HEK293 (cell line): ENCODE measurements at regions of chr17 and their contacts with region 1.

Region 1: DNA sequence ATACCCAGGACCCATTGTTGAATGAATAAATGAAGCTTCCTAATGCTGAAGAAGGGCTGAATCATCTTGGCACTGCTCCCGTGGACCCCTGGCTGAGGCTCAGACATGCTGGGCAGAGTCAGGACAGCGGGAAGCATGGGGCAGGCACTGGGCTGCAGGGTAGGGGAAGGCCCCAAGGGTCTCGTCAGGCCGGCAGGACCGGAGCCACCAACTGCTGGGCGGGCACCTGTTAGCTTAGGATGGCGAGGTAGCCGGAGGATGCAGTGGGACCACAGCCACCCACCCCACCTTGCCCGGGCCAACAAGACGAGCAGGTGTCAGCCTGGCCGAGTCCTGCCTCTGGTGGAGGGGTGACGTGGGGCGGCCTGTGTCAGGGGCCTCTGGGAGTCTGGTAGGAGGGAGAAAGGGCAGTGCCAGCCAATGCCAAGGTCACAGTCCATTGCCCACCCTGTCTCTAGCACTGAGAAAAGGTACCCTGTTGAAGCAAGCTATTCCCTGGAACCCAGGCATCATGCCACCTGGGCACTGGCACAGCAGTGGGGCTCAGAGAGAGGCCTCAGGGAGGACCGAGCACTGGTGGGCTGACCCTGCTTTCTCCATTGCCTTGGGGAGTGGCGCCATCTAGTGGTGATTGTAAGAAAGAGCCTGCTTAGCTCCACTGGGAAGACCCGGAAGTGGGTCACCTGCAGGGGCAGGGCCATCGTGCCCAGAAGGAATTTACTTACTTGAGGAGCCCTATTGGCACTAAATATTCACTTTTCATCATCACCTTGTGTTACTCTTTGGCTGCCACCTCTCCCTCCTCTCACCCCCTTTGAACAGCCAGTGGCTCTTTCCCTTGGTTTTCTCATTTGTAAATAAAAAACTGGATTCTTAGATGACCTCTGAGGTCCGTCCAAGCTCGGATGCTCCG is 3.0 kb upstream of the DLX3 start:
- H3K4me3 ChIP-seq: no peak overlapping the region
- H3K27ac ChIP-seq: no peak overlapping the region
- H3K4me1 ChIP-seq: peaks cover 4% of the 10 kb centered on the region
- CTCF ChIP-seq: peak; percentile 95

Region 2: DNA sequence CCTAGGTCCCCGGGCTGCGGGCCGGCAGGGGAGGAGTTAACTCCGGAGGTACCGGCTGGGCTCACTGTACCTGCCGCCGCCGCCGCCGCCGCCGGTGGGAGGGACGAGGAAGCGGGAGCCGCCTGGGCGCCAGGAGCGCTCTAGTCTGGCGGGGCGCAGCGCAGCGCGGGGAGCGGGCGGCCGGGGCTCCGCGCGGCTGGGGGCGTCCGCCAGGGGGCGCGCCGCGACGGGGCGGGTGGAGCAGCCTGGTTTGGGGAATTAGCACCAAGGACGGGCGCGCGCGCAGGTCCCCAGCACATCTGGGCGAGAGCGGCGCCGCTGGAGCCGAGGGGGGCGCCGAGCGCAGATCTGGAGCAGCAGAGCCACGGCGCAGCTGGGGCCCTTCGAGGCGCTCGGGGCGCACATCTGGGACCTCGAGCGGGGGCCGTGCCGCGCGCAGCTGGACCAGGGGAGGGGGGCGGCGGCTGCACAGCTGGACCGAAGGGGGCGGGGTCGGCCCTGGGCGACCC is 422.4 kb before region 1 on chr17 and contains the start of gene NXPH3:
- CTCF ChIA-PET with region 1: interaction called, 61 read pairs
- POLR2A ChIA-PET with region 1: interaction called, 3 read pairs
- H3K4me3 ChIP-seq: peak within 1 kb of the TSS; percentile 56
- H3K27ac ChIP-seq: no peak within 1 kb of the TSS
- H3K4me1 ChIP-seq: peaks cover 3% of the 10 kb centered on the region; the same call in 1 of the 2 replicates
- CTCF ChIP-seq: no peak

Region 3: DNA sequence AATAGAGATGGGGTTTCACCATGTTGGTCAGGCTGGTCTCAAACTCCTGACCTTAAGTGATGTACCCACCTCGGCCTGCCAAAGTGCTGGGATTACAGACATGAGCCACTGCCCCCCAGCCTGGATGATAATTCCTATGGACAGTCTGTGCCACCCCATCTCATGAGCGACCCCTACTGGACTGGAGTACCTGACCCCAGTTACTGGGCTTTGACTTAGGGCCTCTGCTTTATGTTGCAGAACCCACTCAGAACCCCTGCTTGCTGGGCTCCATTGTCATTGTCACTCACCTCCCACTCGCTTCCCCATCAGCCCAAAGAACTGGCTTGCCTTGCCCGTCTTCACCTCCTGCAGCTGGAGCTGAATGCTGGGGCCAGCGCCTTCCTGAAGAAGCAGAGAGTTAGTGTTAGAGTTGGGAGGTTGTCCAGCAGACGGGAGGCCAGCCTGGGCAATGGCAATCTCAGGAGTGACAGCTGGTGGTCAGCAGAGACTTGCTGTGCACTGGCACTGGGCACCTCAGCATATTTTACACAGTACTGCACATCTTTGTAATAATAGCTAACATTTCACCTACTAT is 154.2 kb before region 1 on chr17:
- CTCF ChIA-PET with region 1: interaction called, 36 read pairs
- POLR2A ChIA-PET with region 1: no interaction called
- H3K4me3 ChIP-seq: no peak overlapping the region
- H3K27ac ChIP-seq: no peak overlapping the region
- H3K4me1 ChIP-seq: no peaks in the 10 kb centered on the region
- CTCF ChIP-seq: peak; percentile 34; the same call in 1 of the 2 replicates

Region 4: DNA sequence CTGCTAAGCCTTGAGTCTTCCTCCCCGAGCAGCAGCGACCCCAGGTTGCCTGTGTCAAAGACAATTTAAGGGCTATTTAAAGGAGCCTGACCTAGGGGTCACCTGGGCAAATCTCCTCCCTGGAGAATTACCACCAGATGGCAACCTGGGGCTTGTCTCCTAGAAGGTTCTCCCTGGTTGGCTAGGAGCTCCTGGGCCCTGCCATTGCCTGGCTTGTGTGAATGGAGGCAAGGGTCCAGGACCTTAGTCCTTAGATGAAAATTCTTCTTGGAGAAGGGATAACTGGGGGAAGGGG is 98.9 kb before region 1 on chr17:
- CTCF ChIA-PET with region 1: interaction called, 73 read pairs
- POLR2A ChIA-PET with region 1: interaction called, 4 read pairs
- H3K4me3 ChIP-seq: no peak overlapping the region
- H3K27ac ChIP-seq: no peak overlapping the region
- H3K4me1 ChIP-seq: peaks cover 6% of the 10 kb centered on the region; the same call in 1 of the 2 replicates
- CTCF ChIP-seq: 0 out of 2 replicates have a peak, but pooled peaks have one; percentile 33

Region 5: DNA sequence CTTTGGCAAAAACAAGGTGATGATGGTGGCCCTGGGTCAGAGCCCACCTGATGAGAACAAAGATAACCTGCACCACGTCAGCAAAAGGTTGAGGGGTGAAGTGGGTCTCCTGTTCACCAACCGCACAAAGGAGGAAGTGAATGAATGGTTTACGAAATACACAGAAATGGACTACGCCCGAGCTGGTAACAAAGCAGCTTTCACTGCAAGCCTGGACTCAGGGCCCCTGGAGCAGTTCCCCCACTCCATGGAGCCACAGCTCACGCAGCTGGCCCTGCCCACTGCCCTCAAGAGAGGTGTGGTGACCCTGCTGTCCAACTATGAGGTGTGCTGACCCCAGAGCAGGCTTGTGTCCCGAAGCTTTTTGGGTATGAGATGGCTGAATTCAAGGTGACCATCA is 58.7 kb before region 1 on chr17:
- CTCF ChIA-PET with region 1: interaction called, 23 read pairs
- POLR2A ChIA-PET with region 1: no interaction called
- H3K4me3 ChIP-seq: no peak overlapping the region
- H3K27ac ChIP-seq: no peak overlapping the region
- H3K4me1 ChIP-seq: no peaks in the 10 kb centered on the region
- CTCF ChIP-seq: no peak

Region 6: GRCh38 chr17:49980703-49981197 is 17.3 kb before region 1 on chr17:
- CTCF ChIA-PET with region 1: interaction called, 112 read pairs
- POLR2A ChIA-PET with region 1: interaction called, 14 read pairs
- H3K4me3 ChIP-seq: no peak overlapping the region
- H3K27ac ChIP-seq: no peak overlapping the region
- H3K4me1 ChIP-seq: peaks cover 26% of the 10 kb centered on the region
- CTCF ChIP-seq: no peak

Region 7: DNA sequence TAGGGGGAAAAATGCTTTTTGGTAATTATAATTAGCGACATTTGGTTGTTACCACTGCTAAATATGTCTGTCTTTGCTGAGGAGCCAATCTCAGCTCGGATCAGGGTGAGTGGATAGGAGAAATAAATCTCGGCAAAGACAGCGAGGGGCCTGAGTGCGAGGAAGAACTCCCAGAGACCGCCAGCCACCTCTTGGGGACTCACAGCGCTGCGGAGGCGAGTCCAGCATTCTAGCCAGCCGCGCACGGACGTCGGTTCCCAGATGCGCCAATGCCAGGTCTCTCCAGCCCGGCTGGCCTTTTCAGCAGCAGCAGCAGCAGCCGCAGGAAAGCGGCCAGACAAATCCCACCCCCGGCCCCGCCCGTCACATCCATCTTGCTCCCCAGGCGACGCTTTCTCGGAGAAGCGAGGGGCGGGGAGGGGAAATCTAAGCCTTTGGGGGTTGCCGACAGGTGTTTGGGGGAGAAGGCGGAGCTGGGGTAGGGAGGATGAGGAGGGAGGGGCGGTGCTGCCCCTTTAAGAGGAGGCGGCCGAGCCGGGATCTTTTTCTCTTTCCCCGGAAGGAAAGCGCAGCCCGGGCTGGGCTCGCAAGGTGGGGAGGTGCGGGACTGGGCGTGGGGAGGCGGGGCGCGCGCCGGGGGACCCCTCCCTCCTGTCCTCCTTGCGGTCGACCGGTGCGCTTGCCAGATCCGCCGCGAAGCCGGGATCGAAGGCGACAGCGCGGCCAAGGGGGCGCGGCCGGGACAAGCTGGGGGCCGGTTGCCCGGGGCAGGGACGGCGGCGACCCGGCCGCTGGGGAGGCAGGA is 57.6 kb after region 1 on chr17 and contains the start of gene ITGA3:
- CTCF ChIA-PET with region 1: interaction called, 18 read pairs
- POLR2A ChIA-PET with region 1: no interaction called
- H3K4me3 ChIP-seq: peak within 1 kb of the TSS; percentile 64
- H3K27ac ChIP-seq: peak within 1 kb of the TSS; percentile 75
- H3K4me1 ChIP-seq: peaks cover 16% of the 10 kb centered on the region
- CTCF ChIP-seq: no peak

Region 8: GRCh38 chr17:50139950-50140871 is 142.2 kb after region 1 on chr17:
- CTCF ChIA-PET with region 1: no interaction called
- POLR2A ChIA-PET with region 1: no interaction called
- H3K4me3 ChIP-seq: no peak overlapping the region
- H3K27ac ChIP-seq: no peak overlapping the region
- H3K4me1 ChIP-seq: no peaks in the 10 kb centered on the region
- CTCF ChIP-seq: peak; percentile 87

Region 9: GRCh38 chr17:50252781-50253180 is 254.7 kb after region 1 on chr17:
- CTCF ChIA-PET with region 1: no interaction called
- POLR2A ChIA-PET with region 1: no interaction called
- H3K4me3 ChIP-seq: no peak overlapping the region
- H3K27ac ChIP-seq: no peak overlapping the region
- H3K4me1 ChIP-seq: no peaks in the 10 kb centered on the region
- CTCF ChIP-seq: no peak